Posterior vena cava (tissue), 2 donors: ENCODE measurements at regions of chr10 and their contacts with region 1.

Region 1: GRCh38 chr10:23859598-23859997 is 349.3 kb upstream of the KIAA1217 start:
- DNase-seq: no peak

Region 2: DNA sequence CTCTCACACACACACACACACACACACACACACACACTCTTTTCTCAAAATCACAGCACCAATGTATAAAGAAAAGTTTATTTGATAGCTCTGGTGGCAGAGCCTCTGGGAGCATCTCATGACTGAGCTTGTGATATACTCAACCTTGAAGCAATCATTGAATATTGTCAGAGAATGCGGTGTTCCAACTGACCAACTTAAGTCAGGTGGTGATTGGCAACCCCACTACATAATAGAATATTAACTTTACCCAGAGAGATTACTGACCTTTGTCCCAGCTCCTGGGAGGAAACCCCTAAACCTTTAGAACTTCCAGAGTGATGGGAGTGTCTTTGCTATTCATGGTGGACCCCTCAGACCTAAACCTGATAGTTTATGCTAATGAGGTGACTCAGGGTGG is 277.7 kb before region 1 on chr10:
- intact Hi-C with region 1: loop called in 1 of 2 experiments (anchors 5 kb)
- DNase-seq: no peak

Region 3: DNA sequence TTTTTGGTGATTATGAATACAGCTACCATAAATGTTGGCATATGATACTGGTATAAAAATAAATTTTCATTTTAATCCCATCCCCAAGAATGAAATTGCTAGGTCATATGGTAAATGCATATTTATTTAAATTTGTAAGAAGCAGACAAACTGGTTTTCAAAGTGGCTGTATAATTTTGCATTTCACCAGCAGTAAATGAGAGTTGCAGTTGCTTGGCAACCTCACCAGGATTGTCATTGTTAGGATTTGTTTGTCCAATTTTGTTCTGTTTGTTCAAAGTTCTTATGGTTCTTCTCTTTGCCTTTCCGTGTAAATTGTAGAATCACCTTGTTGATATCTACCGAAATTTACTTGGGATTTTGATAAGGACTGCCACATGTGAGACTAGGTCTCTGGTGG is 183.3 kb before region 1 on chr10:
- intact Hi-C with region 1: no loop called
- DNase-seq: no peak